Aorta (tissue), 5 donors: ENCODE measurements at regions of chr22 and their contacts with region 1.

Region 1: DNA sequence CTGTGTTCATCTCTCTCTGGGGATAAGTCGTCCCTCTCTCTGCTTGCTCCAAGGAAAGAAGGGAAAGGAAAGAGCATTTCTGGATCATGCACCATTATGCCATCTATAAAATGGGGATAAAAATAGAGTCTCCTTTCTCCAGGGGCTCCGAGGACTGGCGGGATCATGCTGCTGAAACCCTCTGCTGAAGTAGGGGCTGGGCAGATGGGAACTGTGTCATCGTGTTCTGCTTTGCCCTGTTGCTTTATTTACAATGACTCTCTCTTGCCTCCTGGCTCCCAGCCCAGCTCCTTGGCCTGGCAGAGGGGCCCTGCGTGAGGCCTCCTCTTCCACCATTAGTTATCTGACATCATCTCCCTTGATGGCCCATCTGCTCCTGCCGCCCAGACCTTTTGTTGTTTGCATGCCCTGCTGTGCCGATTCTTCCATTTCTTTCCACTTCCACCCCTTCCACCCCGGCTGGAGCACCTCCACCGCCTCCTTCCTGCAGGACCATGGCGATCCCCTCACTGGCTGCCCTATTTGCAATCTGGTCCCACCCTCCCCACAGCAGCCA is 200.9 kb downstream of the MYO18B start:
- DNase-seq: no peak
- ATAC-seq: no peak
- H3K4me3 ChIP-seq: no peak overlapping the region
- H3K27ac ChIP-seq: no peak overlapping the region
- H3K4me1 ChIP-seq: no peaks in the 10 kb centered on the region
- H3K27me3 ChIP-seq: no peaks in the 10 kb centered on the region

Region 2: DNA sequence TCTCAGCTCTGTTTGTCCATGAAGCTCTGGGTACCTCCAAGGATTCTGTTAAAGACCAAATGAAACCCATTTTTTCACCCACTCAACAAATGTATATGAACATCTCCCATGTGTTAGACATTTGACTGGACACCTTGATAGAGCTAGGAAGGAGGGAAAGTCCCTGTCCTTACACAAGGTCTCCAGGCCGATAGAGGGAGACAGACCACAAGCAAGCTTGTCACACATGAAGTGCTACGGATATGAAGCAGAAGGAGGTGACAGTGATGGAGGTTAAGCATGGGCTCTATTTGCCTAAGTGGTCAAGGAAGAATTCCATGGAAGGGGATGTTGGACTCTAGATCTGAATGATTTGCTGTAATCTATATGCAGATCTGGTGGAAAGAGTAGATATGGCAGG is 62.4 kb before region 1 on chr22:
- intact Hi-C with region 1: no loop called
- DNase-seq: no peak
- ATAC-seq: no peak
- H3K4me3 ChIP-seq: no peak overlapping the region
- H3K27ac ChIP-seq: no peak overlapping the region
- H3K4me1 ChIP-seq: no peaks in the 10 kb centered on the region
- H3K27me3 ChIP-seq: no peaks in the 10 kb centered on the region

Region 3: GRCh38 chr22:25908755-25909154 is 34.2 kb before region 1 on chr22:
- intact Hi-C with region 1: loop called in 1 of 2 experiments (anchors 1 kb)
- DNase-seq: no peak
- ATAC-seq: no peak
- H3K4me3 ChIP-seq: no peak overlapping the region
- H3K27ac ChIP-seq: no peak overlapping the region
- H3K4me1 ChIP-seq: no peaks in the 10 kb centered on the region
- H3K27me3 ChIP-seq: no peaks in the 10 kb centered on the region

Region 4: GRCh38 chr22:25919452-25919851 is 23.5 kb before region 1 on chr22:
- intact Hi-C with region 1: no loop called
- DNase-seq: no peak
- ATAC-seq: no peak
- H3K4me3 ChIP-seq: no peak overlapping the region
- H3K27ac ChIP-seq: no peak overlapping the region
- H3K4me1 ChIP-seq: no peaks in the 10 kb centered on the region
- H3K27me3 ChIP-seq: no peaks in the 10 kb centered on the region

Region 5: DNA sequence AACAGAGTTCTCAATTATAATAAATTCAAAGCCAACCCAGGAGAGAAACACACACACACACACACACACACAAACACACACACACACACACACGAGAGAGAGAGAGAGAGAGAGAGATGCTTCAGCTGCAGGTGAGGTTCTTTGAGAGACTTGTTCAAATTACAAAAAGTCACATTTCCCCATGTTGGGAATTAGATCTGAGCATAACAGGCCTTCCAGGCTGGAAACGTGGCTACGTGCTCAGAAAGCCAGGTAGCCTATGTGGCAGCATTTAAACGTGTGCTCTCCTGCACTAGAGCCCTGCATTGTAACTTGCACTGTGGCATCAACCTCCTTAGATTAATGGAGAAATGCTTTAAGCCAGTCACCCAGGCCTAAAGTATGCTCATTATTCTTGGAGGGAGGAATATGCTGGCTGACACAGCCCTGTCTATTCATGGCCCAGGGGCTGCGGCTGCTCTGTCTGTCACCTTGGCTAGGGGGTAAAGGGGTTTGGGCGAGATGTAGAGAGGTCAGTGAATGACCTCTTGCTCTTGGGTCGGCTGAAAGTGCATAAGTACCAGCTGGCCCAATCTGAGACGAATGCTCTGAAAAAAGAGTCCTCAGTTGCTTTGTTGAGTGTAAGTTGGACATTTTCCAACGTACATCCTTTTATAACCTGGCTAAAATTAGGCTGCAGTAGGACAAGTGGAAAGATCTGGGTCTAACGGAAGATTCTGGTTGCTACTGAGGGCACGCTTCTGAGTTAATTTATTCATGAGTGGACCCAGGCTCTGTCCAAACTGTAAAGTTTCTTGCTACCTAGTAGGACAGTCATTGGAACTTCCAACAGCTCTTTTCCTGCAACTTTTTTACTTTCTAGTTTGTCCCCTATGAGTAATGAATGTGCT is 55.2 kb after region 1 on chr22:
- intact Hi-C with region 1: no loop called
- DNase-seq: no peak
- ATAC-seq: no peak
- H3K4me3 ChIP-seq: no peak overlapping the region
- H3K27ac ChIP-seq: no peak overlapping the region
- H3K4me1 ChIP-seq: peaks cover 0 to 4% of the 10 kb centered on the region in 2 donors
- H3K27me3 ChIP-seq: no peaks in the 10 kb centered on the region